ENCODE measurements at regions of chr17 and their contacts with region 1.

Region 1: GRCh38 chr17:48543107-48543853 is 1.6 kb downstream of the HOXB2 start:
- DNase-seq: peak in 3 of 4 experiments; percentile 63 to 79 (median 64)
- ATAC-seq: peak; percentile 27
- H3K4me3 ChIP-seq: peak overlapping the region; percentile 90
- H3K27ac ChIP-seq: peak overlapping the region; percentile 95
- H3K4me1 ChIP-seq: peaks cover 21 to 36% of the 10 kb centered on the region in 2 experiments
- H3K27me3 ChIP-seq: no peaks in the 10 kb centered on the region
- CTCF ChIP-seq: peak in 1 of 3 experiments; percentile 20; a peak in 2 of 6 replicates
- EP300 ChIP-seq: no peak
- POLR2A ChIP-seq: 0 out of 2 replicates have a peak, but pooled peaks have one; percentile 36
- RAD21 ChIP-seq: no peak

Region 2: GRCh38 chr17:48500966-48501426 is 42.3 kb before region 1 on chr17:
- CTCF ChIA-PET with region 1: no interaction called
- POLR2A ChIA-PET with region 1: interaction called, 4 read pairs
- in situ Hi-C with region 1: no loop called
- intact Hi-C with region 1: loop called (anchors 2 kb)
- DNase-seq: peak; percentile 35 to 86 (median 61)
- ATAC-seq: peak; percentile 97
- H3K4me3 ChIP-seq: no peak overlapping the region
- H3K27ac ChIP-seq: no peak overlapping the region; the same call in 2 of the 3 replicates
- H3K4me1 ChIP-seq: peaks cover 6 to 36% of the 10 kb centered on the region in 2 experiments; a peak in 4 of 5 replicates
- H3K27me3 ChIP-seq: no peaks in the 10 kb centered on the region
- CTCF ChIP-seq: peak; percentile 69 to 80 (median 73)
- EP300 ChIP-seq: peak; percentile 43
- POLR2A ChIP-seq: no peak
- RAD21 ChIP-seq: peak; percentile 67 to 86

Region 3: GRCh38 chr17:48555258-48556228 is 12.3 kb after region 1 on chr17:
- CTCF ChIA-PET with region 1: no interaction called
- POLR2A ChIA-PET with region 1: interaction called, 12 read pairs
- in situ Hi-C with region 1: no loop called
- intact Hi-C with region 1: no loop called
- DNase-seq: peak; percentile 75 to 93 (median 84)
- ATAC-seq: peak; percentile 83
- H3K4me3 ChIP-seq: peak overlapping the region; percentile 30
- H3K27ac ChIP-seq: peak overlapping the region; percentile 93
- H3K4me1 ChIP-seq: peaks cover 47 to 56% of the 10 kb centered on the region in 2 experiments
- H3K27me3 ChIP-seq: no peaks in the 10 kb centered on the region
- CTCF ChIP-seq: no peak
- EP300 ChIP-seq: peak; percentile 85
- POLR2A ChIP-seq: 0 out of 2 replicates have a peak, but pooled peaks have one; percentile 41
- RAD21 ChIP-seq: no peak

Region 4: GRCh38 chr17:48578616-48579470 is 35.6 kb after region 1 on chr17:
- CTCF ChIA-PET with region 1: no interaction called
- POLR2A ChIA-PET with region 1: interaction called, 3 read pairs
- in situ Hi-C with region 1: no loop called
- intact Hi-C with region 1: loop called (anchors 1 kb)
- DNase-seq: peak in 3 of 4 experiments; percentile 57 to 62 (median 60)
- ATAC-seq: peak; percentile 28
- H3K4me3 ChIP-seq: peak overlapping the region; percentile 71
- H3K27ac ChIP-seq: peak overlapping the region; percentile 95
- H3K4me1 ChIP-seq: peaks cover 43 to 51% of the 10 kb centered on the region in 2 experiments
- H3K27me3 ChIP-seq: no peaks in the 10 kb centered on the region
- CTCF ChIP-seq: no peak
- EP300 ChIP-seq: no peak
- POLR2A ChIP-seq: peak; percentile 73
- RAD21 ChIP-seq: 0 out of 4 replicates have a peak, but pooled peaks of 1 of the 2 experiments have one; percentile 1

Region 5: DNA sequence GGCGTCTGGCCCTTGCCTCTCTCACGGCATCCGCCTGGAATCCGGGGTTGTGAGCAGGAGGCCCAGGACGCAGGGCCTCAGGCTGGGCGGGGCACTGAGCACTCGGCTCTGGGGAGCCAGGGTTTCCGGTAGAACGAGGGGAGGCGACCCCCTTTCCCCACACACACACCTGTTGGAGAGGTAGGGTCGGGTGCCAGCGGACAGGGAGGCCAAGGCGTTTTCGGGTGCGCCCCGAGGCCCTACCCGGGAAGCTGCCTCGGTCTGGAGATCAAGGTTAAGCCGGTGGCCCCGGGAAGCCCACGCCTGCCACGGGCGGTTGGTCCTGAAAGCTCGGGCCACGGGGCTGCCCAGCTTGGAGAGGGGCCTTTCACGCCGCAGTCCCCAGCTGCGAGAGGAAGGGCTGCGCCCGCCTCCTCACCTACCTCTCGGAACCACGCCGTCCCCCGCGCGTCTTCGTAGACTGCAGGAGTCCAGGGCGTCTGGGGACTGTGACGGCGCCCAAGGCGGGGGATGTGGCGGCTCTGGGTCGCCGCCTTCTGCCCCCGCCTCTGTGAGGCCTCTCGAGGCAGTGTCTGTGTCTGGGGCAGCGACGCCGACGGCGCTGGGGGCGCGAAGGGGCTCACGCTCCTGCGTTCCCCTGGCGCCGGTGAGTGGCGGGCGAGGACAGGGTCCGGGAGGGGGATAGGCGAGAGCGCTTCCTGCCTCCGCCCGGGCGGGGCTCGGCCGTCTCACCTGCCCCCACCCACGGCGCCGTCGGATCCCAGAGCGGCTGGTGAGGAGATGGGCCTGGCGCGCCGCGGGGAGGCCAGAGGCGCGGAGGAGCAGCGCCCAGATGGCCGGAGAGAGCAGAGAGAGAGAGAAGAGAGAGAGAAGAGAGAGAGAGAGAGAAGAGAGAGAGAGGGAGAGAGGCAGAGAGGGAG is 103.2 kb after region 1 on chr17:
- CTCF ChIA-PET with region 1: no interaction called
- POLR2A ChIA-PET with region 1: no interaction called
- in situ Hi-C with region 1: no loop called
- intact Hi-C with region 1: no loop called
- DNase-seq: peak; percentile 66 to 77 (median 73)
- ATAC-seq: peak; percentile 83
- H3K4me3 ChIP-seq: peak overlapping the region; percentile 56
- H3K27ac ChIP-seq: peak overlapping the region; percentile 78
- H3K4me1 ChIP-seq: peaks cover 9 to 32% of the 10 kb centered on the region in 2 experiments; a peak in 4 of 5 replicates
- H3K27me3 ChIP-seq: no peaks in the 10 kb centered on the region
- CTCF ChIP-seq: no peak
- EP300 ChIP-seq: no peak
- POLR2A ChIP-seq: 0 out of 2 replicates have a peak, but pooled peaks have one; percentile 37
- RAD21 ChIP-seq: no peak

Measured in K562 (cell line).